GM10248 (cell line): ENCODE measurements at regions of chr11 and their contacts with region 1.

Region 1: GRCh38 chr11:11787305-11788062 is 54.3 kb upstream of the USP47 start:
- DNase-seq: peak; percentile 59
- CTCF ChIP-seq: peak; percentile 70

Region 2: GRCh38 chr11:11022125-11022730 is 765.3 kb before region 1 on chr11:
- CTCF ChIA-PET with region 1: interaction called, 102 read pairs
- POLR2A ChIA-PET with region 1: no interaction called
- DNase-seq: peak; percentile 40
- CTCF ChIP-seq: peak; percentile 45

Region 3: GRCh38 chr11:11760838-11761237 is 26.6 kb before region 1 on chr11:
- CTCF ChIA-PET with region 1: interaction called, 16 read pairs
- POLR2A ChIA-PET with region 1: no interaction called
- DNase-seq: no peak
- CTCF ChIP-seq: no peak